Naive thymus-derived CD4-positive, alpha-beta T cell (primary cell): ENCODE measurements at regions of chr7 and their contacts with region 1.

Region 1: GRCh38 chr7:45111298-45112223 is at the start of gene TBRG4:
- DNase-seq: peak; percentile 88 to 96 (median 94)
- ATAC-seq: peak; percentile 94
- H3K4me3 ChIP-seq: peak within 1 kb of the TSS; percentile 80
- H3K4me3 Mint-ChIP-seq: peak within 1 kb of the TSS; percentile 93 to 100 (median 96)
- H3K27ac ChIP-seq: peak within 1 kb of the TSS; percentile 98
- H3K27ac Mint-ChIP-seq: peak within 1 kb of the TSS; percentile 98 to 100 (median 99)
- H3K4me1 ChIP-seq: peaks cover 17 to 45% of the 10 kb centered on the region in 2 donors
- H3K4me1 Mint-ChIP-seq: peaks cover 30 to 59% (median 50%) of the 10 kb centered on the region in 7 donors
- H3K27me3 ChIP-seq: no peaks in the 10 kb centered on the region
- H3K27me3 Mint-ChIP-seq: peaks cover 0 to 31% (median 0%) of the 10 kb centered on the region in 5 donors
- total RNA-seq, gene TBRG4: 93.7 to 143 (median 107) TPM

Region 2: GRCh38 chr7:44200647-44201461 is 910.7 kb before region 1 on chr7 and contains the start of gene YKT6:
- CTCF ChIA-PET with region 1: no interaction called
- POLR2A ChIA-PET with region 1: no interaction called
- intact Hi-C with region 1: loop called in 1 of 2 experiments (anchors 2 kb)
- DNase-seq: peak; percentile 73 to 94 (median 93)
- ATAC-seq: peak; percentile 99
- H3K4me3 ChIP-seq: peak within 1 kb of the TSS; percentile 95
- H3K4me3 Mint-ChIP-seq: peak within 1 kb of the TSS; percentile 81 to 90 (median 85)
- H3K27ac ChIP-seq: peak within 1 kb of the TSS; percentile 91
- H3K27ac Mint-ChIP-seq: peak within 1 kb of the TSS; percentile 19 to 88 (median 63)
- H3K4me1 ChIP-seq: peaks cover 15 to 16% of the 10 kb centered on the region in 2 donors
- H3K4me1 Mint-ChIP-seq: peaks cover 24 to 38% (median 32%) of the 10 kb centered on the region in 7 donors
- H3K27me3 ChIP-seq: no peaks in the 10 kb centered on the region
- H3K27me3 Mint-ChIP-seq: peaks cover 0 to 7% (median 3%) of the 10 kb centered on the region in 5 donors
- total RNA-seq, gene YKT6: 58.1 to 80.9 (median 62.3) TPM

Region 3: GRCh38 chr7:44581879-44582603 is 529.5 kb before region 1 on chr7 and contains the start of gene TMED4:
- CTCF ChIA-PET with region 1: no interaction called
- POLR2A ChIA-PET with region 1: interaction called, 5 read pairs
- intact Hi-C with region 1: loop called (anchors 1 kb)
- DNase-seq: peak; percentile 100
- ATAC-seq: peak; percentile 96
- H3K4me3 ChIP-seq: peak within 1 kb of the TSS; percentile 95
- H3K4me3 Mint-ChIP-seq: peak within 1 kb of the TSS; percentile 86 to 97 (median 92)
- H3K27ac ChIP-seq: peak within 1 kb of the TSS; percentile 90
- H3K27ac Mint-ChIP-seq: peak within 1 kb of the TSS; percentile 95 to 99 (median 98)
- H3K4me1 ChIP-seq: peaks cover 14 to 19% of the 10 kb centered on the region in 2 donors
- H3K4me1 Mint-ChIP-seq: peaks cover 13 to 43% (median 38%) of the 10 kb centered on the region in 7 donors
- H3K27me3 ChIP-seq: no peaks in the 10 kb centered on the region
- H3K27me3 Mint-ChIP-seq: peaks cover 0 to 12% (median 0%) of the 10 kb centered on the region in 5 donors
- total RNA-seq, gene TMED4: 70.0 to 98.5 (median 95.3) TPM

Region 4: DNA sequence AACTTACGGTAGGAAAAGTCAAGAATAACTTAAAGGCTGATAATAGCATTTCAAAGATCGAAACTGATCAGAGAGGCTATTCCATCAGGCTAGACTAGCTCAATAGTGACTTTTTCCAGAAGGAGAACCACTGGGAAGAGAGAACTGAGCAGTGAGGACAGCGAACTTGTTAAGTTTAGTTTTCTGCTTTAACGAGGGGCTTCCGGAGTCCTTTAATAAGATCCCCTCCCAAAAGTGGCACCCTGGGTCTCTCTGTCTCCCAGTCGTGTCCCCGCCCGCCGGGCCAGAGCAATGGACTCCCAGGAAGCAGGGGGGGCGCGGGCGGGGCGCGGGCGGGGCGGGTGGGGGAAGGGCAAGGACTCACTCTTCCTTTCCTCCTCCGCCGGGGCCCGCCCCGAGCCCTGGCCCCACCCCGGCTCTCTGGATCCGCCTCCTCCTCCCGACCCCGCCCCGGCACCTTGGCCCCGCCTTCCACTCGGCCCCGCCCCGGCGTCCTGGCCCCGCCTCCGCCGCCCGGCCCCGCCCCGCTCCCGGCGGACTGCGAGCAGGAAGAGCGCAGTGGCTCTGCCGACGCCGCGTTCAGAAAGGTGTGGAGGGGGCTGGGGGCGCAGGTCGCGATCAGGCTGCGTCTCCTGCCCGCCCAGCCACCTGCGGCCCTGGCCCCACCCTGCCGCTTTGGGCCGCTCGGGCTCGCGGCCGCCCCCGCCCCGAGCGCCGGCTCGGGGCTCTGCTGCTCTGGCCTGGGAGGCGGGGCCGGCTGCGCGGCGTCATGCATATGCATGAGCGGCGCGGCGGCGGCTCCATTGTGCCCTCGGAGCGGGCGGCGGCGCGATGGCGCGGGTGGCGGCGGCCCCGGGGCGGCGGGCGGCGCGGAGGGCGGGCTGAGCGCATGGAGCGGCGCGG is 363.3 kb before region 1 on chr7 and contains the start of gene ZMIZ2:
- CTCF ChIA-PET with region 1: no interaction called
- POLR2A ChIA-PET with region 1: interaction called, 3 read pairs
- intact Hi-C with region 1: loop called in 1 of 2 experiments (anchors 2 kb)
- DNase-seq: peak; percentile 87 to 99 (median 93)
- ATAC-seq: peak; percentile 94
- H3K4me3 ChIP-seq: peak within 1 kb of the TSS; percentile 64
- H3K4me3 Mint-ChIP-seq: peak within 1 kb of the TSS; percentile 77 to 92 (median 88)
- H3K27ac ChIP-seq: peak within 1 kb of the TSS; percentile 98
- H3K27ac Mint-ChIP-seq: peak within 1 kb of the TSS; percentile 81 to 98 (median 92)
- H3K4me1 ChIP-seq: peaks cover 21 to 22% of the 10 kb centered on the region in 2 donors
- H3K4me1 Mint-ChIP-seq: peaks cover 22 to 63% (median 45%) of the 10 kb centered on the region in 7 donors
- H3K27me3 ChIP-seq: no peaks in the 10 kb centered on the region
- H3K27me3 Mint-ChIP-seq: no peaks in the 10 kb centered on the region
- total RNA-seq, gene ZMIZ2: 108 to 187 (median 144) TPM

Region 5: DNA sequence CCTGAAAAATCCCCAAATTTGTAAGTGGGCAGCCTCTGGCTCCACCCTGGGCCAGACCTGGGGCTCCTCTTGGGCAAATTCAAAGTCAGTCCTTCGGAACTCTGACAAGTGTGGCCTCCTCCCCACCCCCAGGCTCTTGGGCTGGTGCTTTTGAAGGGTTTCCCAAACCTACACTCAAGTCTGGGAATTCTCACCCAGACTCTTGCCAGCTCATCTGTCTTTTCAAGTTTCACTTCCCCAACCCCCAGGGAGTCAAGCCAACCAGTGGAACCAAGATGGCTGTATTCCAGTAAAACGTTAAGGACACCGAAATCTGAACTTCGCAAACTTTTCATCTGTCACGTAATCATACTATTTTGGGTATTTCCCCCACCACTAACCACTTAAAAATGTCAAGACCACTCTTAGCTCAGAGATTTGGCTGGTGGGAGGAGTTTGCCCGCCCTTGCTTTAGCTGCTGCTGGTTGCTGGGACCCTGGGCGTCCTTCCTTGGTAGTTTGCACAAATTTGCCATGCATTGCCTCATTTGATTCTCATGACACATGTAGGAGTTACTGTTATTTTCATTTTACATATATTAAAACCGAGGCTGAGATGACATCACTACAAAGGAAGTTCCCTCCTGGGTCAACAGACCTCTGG is 131.0 kb before region 1 on chr7:
- CTCF ChIA-PET with region 1: no interaction called
- POLR2A ChIA-PET with region 1: interaction called, 15 read pairs
- intact Hi-C with region 1: loop called (anchors 1 kb)
- DNase-seq: peak in 2 of 9 donors; percentile 63 to 69
- ATAC-seq: peak; percentile 38
- H3K4me3 ChIP-seq: peak overlapping the region; percentile 78
- H3K4me3 Mint-ChIP-seq: peak overlapping the region; percentile 39 to 100 (median 70)
- H3K27ac ChIP-seq: peak overlapping the region; percentile 83
- H3K27ac Mint-ChIP-seq: peak overlapping the region; percentile 85 to 99 (median 96)
- H3K4me1 ChIP-seq: peaks cover 60 to 63% of the 10 kb centered on the region in 2 donors
- H3K4me1 Mint-ChIP-seq: peaks cover 54 to 96% (median 68%) of the 10 kb centered on the region in 7 donors
- H3K27me3 ChIP-seq: no peaks in the 10 kb centered on the region
- H3K27me3 Mint-ChIP-seq: no peaks in the 10 kb centered on the region

Region 6: DNA sequence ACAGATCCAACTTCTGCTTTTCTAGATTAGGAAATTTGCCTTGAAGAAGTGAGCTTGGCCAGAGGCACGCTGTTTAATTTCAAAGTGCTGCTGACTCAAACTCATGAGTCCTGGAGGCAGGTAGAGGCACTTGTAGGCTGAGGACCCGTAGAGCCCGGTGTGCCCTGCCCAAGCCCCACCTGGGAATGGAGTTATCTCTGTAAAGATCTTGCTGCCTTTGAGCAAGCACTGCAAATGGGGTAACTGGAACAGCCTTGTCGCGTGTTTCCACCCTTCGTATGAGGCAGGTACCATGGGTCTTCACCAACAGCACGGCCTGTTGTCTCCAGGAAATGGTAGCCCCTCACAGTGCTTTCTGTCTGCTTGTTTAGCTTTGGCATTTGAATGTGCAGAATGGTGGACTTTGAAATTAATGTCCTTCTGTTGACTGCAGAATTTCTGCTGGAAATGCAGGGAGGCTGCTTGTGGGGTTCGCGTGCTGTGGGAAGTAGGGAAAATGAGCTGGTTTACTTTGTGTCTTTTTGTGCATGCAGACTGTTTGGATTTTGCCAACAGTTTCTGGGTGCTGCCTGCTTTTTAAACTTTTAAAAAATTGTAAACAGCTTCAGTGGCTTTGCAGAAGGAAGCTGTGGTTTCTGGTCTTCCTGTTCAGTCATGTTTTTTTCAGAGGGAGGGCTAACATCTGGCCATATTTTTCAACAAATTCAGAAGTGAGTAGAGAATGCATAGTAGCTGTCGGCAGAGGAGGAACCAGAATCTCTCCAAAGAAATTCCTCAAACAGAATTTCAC is 84.4 kb before region 1 on chr7:
- CTCF ChIA-PET with region 1: no interaction called
- POLR2A ChIA-PET with region 1: interaction called, 16 read pairs
- intact Hi-C with region 1: loop called (anchors 1 kb)
- DNase-seq: peak in 7 of 9 donors; percentile 42 to 79 (median 71)
- ATAC-seq: peak; percentile 81
- H3K4me3 ChIP-seq: peak overlapping the region; percentile 87
- H3K4me3 Mint-ChIP-seq: peak overlapping the region; percentile 89 to 98 (median 95)
- H3K27ac ChIP-seq: peak overlapping the region; percentile 86
- H3K27ac Mint-ChIP-seq: peak overlapping the region; percentile 80 to 97 (median 93)
- H3K4me1 ChIP-seq: peaks cover 34 to 57% of the 10 kb centered on the region in 2 donors
- H3K4me1 Mint-ChIP-seq: peaks cover 44 to 70% (median 62%) of the 10 kb centered on the region in 7 donors
- H3K27me3 ChIP-seq: no peaks in the 10 kb centered on the region
- H3K27me3 Mint-ChIP-seq: no peaks in the 10 kb centered on the region

Region 7: DNA sequence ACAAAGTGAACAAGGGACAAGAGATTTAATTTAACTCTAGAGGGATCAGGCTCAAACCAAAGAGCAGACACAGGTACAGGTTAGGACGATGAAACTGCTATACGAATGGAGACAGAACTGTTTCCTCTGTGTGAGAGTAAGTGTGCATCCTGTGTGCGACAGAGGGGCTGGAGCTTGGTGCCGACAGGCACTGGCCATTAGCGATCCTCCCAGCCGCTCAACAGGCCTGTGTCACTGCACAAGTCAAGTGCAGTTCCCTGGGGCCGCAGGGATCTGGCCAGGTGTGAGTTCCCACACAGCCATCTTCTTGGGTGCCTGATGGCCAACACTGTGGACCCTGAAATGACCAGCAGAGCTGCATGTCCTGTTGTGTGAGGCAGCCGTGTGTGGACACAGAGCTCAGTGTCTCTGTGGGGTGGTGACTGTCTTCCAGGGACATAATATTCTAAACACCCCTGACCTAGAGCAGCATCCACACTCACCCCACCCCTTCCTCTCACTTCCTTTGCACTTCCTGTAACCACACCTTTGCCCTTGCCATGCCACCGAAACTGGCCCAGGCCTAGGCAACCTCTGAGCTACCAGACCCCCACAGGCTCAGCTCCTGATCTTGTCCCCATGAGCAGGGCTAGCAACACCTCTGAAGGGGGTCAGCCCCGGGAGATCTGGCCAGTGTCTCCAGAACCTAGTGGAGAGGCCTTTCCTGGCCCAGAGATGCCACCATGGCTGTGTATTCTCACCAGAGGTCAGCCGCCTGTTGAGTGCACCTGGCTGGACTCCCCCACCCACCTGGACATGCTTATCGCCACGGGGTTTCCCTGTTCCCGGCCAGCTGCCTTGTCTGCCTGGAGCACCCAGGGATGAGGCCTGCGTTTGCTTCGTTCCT is 11.7 kb after region 1 on chr7:
- CTCF ChIA-PET with region 1: no interaction called
- POLR2A ChIA-PET with region 1: interaction called, 14 read pairs
- intact Hi-C with region 1: no loop called
- DNase-seq: peak in 1 of 9 donors; percentile 7
- ATAC-seq: peak; percentile 36
- H3K4me3 ChIP-seq: peak overlapping the region; percentile 28
- H3K4me3 Mint-ChIP-seq: peak overlapping the region in 9 of 10 donors; percentile 32 to 84 (median 65)
- H3K27ac ChIP-seq: peak overlapping the region; percentile 28
- H3K27ac Mint-ChIP-seq: peak overlapping the region; percentile 14 to 95 (median 75)
- H3K4me1 ChIP-seq: peaks cover 14 to 17% of the 10 kb centered on the region in 2 donors
- H3K4me1 Mint-ChIP-seq: peaks cover 8 to 20% (median 16%) of the 10 kb centered on the region in 7 donors
- H3K27me3 ChIP-seq: peaks cover 0 to 3% of the 10 kb centered on the region in 2 donors
- H3K27me3 Mint-ChIP-seq: peaks cover 0 to 5% (median 0%) of the 10 kb centered on the region in 5 donors

Region 8: DNA sequence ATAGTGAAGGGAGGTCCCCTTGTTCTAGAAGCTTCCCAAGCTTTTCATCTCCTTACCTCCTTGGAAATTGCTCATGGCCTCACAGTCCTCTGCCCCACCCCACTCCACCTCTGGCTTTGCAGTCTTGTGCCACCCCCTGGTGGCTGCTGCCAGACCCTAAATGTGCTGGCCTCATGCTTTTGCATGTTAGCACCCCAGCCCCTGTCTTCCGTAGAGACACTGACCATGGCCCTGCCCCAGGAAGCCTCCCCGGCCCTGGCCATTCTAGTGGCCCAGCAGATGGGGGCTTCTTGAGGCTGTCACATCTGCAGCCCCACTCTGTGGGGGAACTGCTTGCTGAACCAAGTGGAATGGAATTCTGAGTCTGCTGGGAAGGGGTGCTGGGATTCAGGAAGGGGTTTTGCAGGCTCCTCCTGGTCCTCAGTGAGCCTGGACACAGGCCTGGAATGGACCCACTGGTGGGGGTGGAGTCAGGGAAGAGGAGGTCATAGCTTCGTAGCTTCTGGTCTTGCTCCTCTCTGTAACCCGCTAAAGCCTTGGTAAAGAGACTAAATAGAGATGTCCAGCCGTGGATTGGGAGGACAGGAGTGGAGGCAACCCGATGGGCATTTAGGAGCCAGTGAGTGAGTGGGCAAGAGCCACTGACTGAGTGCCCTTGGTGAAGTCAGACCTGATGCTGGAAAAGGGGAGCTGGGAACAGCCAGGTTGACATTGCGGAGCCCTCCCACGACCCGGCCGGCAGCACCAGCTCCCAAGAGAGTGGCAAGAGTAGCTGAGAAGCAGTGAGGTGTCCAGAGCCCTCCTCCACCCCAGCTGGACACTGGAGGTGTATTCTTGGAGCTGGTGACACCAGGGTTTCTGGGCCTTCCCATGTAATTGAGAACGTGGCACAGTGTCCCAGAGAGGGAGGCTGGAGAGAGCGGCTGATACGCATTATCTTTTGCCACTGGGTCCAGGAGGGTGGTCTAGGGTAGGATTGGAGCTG is 67.0 kb after region 1 on chr7:
- CTCF ChIA-PET with region 1: no interaction called
- POLR2A ChIA-PET with region 1: no interaction called
- intact Hi-C with region 1: no loop called
- DNase-seq: no peak
- ATAC-seq: no peak
- H3K4me3 ChIP-seq: no peak overlapping the region
- H3K4me3 Mint-ChIP-seq: no peak overlapping the region
- H3K27ac ChIP-seq: no peak overlapping the region
- H3K27ac Mint-ChIP-seq: peak overlapping the region in 1 of 9 donors; percentile 18
- H3K4me1 ChIP-seq: no peaks in the 10 kb centered on the region
- H3K4me1 Mint-ChIP-seq: no peaks in the 10 kb centered on the region
- H3K27me3 ChIP-seq: no peaks in the 10 kb centered on the region
- H3K27me3 Mint-ChIP-seq: peaks cover 0 to 19% (median 7%) of the 10 kb centered on the region in 5 donors